Mucosa of descending colon (tissue), 3 donors: ENCODE measurements at regions of chr7 and their contacts with region 1.

Region 1: DNA sequence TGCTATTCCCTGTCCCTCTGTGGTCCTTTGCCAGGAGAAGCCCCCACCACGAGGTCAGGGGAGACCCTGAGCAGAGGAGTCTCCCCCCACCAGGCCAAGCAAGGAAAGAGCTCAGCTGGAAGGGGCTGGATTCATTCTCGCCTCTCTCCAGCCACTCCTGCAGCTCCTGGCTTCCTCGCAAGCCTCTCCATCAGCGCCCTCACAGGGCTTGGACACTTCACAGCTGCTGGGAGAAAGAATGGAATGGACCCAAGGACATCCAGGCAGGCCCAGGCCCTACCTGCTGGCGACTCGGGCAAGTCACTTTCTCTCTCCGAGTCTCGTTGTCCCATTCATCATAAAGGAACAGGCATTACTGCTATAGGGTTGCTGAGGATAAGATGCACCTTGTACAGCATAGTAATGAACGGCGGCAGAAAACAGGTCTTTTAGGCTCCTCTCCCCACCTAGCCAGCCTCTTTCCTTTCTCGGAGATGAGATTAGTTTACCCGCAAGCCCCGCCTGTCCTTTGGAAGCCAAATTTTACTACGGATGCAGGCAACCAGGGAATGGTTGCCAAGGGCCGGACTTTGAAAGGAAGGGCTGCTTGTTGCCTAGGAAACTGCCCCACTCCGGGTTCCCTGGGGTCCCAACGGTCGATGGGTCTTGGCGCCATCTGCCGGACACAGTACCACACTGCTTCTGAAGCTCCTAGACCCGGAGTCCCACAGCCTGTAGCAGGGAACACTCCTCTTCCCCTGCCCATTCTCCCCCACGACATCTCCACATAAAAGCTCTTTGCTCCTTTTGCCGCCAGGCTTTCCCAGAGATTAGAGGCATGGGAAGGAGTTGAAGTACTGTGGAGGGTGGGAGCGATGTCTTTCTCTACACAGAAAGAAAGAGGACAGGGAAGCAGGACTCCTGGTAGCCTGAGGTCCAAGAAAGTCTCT is 22.3 kb downstream of the IMPDH1 start:
- DNase-seq: peak in 2 of 3 donors; percentile 77
- ATAC-seq: peak; percentile 85
- H3K4me3 ChIP-seq: no peak overlapping the region
- H3K4me1 ChIP-seq: no peaks in the 10 kb centered on the region
- CTCF ChIP-seq: peak; percentile 75

Region 2: DNA sequence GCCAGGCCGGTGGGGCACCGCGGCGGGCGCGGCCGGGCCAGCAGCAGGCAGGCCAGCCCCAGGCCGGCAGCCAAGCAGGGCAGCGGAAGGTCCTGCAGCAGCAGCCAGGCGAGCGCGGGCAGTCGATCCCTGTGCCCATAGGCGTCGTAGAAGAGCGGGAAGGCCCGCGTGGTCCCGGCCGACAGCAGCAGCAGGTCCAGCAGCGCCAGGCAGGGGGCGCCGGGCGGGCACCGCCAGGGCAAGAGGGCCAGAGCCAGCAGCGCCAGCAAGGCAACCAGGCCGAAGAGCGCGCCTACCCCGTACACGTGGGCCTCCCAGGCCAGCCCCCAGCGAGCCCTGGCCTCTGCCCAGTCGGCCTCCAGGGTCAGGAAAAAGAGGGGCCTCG is 35.3 kb before region 1 on chr7:
- intact Hi-C with region 1: loop called in 1 of 2 experiments (anchors 5 kb)
- DNase-seq: peak in 2 of 3 donors; percentile 27 to 55
- ATAC-seq: peak; percentile 56
- H3K4me3 ChIP-seq: no peak overlapping the region
- H3K4me1 ChIP-seq: peaks cover 10% of the 10 kb centered on the region
- CTCF ChIP-seq: no peak

Region 3: GRCh38 chr7:128530855-128531104 is 143.3 kb after region 1 on chr7:
- intact Hi-C with region 1: no loop called
- DNase-seq: peak in 1 of 3 donors; percentile 69
- ATAC-seq: no peak
- H3K4me3 ChIP-seq: peak overlapping the region; percentile 78
- H3K4me1 ChIP-seq: peaks cover 16% of the 10 kb centered on the region
- CTCF ChIP-seq: no peak